Activated CD4-positive, alpha-beta T cell treated with anti-CD3 and anti-CD28 coated beads for 36 hours (primary cell): ENCODE measurements at regions of chr14 and their contacts with region 1.

Region 1: GRCh38 chr14:75002392-75003249 is at the start of gene EIF2B2:
- DNase-seq: peak; percentile 99
- ATAC-seq: peak; percentile 97
- H3K4me3 Mint-ChIP-seq: peak within 1 kb of the TSS; percentile 87
- H3K27ac Mint-ChIP-seq: peak within 1 kb of the TSS; percentile 88
- H3K4me1 Mint-ChIP-seq: peaks cover 34% of the 10 kb centered on the region
- H3K27me3 Mint-ChIP-seq: no peaks in the 10 kb centered on the region
- total RNA-seq, gene EIF2B2: 55.6 to 69.8 TPM

Region 2: DNA sequence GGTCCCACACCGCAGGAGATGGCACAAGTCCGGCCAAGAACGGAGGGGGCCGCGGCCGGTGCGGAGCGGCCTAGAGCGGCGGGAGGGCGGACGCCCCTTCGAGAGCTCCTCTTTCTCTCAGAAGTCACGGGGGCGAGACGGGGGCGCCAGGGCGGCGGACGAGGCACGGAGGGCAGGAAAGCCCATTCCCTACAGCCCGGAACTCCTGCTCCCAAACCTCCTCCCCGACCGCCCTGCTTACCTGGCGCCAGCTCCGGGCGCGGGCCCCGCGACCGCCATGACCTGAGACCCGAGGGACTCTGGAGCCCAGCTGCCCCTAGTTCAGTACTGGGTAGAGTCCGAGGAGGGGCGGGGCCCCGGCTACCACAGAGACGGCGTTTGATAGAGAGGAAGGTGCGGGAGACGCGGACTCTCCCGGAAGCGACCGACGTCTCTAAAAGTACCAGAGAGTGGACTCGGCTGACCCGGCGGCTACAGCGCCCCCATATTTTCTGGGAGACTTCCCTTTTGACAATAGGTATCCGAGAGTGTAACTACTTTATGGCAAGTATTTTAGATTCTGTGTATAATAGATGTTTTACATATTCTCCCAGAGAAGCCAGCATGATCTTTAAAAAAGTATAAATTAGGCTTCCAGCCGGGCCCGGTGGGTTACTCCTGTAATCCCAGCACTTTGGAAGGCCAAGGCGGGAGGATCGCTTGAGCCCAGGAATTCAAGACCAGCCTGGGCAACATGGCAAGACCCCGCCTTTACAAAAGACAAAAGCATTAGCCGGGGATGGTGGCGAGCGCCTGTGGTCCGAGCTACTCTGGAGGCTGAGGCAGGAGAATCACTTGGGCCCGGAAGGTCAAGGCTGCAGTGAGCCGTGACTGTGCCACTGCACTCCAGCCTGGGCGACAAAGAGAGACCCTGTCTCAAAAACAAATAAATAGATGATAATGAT is 699.7 kb before region 1 on chr14 and contains the start of gene ABCD4:
- CTCF ChIA-PET with region 1: no interaction called
- POLR2A ChIA-PET with region 1: no interaction called
- intact Hi-C with region 1: loop called in 1 of 2 experiments (anchors 2 kb)
- DNase-seq: peak; percentile 91
- ATAC-seq: peak; percentile 95
- H3K4me3 Mint-ChIP-seq: peak within 1 kb of the TSS; percentile 98
- H3K27ac Mint-ChIP-seq: peak within 1 kb of the TSS; percentile 98
- H3K4me1 Mint-ChIP-seq: peaks cover 32% of the 10 kb centered on the region
- H3K27me3 Mint-ChIP-seq: no peaks in the 10 kb centered on the region
- total RNA-seq, gene ABCD4: 43.0 to 43.1 TPM

Region 3: DNA sequence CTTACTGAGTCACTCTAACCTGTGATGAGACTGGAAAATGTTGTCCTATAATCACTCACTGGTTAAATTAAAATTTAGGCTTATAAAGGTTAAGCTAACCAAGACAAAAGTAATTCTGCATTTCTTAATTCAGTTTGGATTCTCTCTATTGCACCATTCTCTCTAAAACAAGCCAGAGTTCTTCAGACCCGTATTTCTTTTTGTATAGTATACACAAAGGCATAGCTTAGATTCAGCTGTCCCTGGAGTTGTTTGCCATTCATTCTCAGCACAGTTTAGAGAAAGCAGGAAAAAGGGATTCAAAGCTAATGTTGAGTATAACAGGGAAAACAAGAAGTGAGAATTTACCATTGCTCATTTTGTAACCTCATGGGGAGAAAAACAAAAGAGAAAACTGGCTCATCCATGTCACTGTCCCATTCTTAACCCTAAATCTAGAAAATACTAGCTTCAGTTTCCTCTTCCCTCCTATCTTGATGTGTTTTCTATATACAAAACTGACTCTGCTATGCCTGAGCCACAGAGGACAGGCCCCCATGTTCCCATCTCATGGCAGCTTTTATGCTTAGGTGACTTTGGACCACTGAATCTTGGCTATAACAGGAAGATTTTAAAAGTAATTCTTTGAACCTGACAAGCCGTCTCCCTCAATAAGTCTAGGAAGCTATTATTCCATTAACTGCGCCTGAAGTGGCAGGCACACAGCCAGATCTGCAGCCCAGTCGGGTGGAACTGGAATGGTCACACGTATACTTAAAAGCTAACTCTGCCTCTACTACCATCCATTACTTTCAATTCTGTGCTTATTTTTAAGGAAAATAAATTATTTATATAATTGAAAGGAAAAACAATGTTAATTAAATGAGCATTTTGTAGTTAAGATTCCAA is 296.8 kb before region 1 on chr14:
- CTCF ChIA-PET with region 1: no interaction called
- POLR2A ChIA-PET with region 1: no interaction called
- intact Hi-C with region 1: no loop called
- DNase-seq: no peak
- ATAC-seq: no peak
- H3K4me3 Mint-ChIP-seq: no peak overlapping the region
- H3K27ac Mint-ChIP-seq: no peak overlapping the region
- H3K4me1 Mint-ChIP-seq: peaks cover 37% of the 10 kb centered on the region
- H3K27me3 Mint-ChIP-seq: no peaks in the 10 kb centered on the region

Region 4: DNA sequence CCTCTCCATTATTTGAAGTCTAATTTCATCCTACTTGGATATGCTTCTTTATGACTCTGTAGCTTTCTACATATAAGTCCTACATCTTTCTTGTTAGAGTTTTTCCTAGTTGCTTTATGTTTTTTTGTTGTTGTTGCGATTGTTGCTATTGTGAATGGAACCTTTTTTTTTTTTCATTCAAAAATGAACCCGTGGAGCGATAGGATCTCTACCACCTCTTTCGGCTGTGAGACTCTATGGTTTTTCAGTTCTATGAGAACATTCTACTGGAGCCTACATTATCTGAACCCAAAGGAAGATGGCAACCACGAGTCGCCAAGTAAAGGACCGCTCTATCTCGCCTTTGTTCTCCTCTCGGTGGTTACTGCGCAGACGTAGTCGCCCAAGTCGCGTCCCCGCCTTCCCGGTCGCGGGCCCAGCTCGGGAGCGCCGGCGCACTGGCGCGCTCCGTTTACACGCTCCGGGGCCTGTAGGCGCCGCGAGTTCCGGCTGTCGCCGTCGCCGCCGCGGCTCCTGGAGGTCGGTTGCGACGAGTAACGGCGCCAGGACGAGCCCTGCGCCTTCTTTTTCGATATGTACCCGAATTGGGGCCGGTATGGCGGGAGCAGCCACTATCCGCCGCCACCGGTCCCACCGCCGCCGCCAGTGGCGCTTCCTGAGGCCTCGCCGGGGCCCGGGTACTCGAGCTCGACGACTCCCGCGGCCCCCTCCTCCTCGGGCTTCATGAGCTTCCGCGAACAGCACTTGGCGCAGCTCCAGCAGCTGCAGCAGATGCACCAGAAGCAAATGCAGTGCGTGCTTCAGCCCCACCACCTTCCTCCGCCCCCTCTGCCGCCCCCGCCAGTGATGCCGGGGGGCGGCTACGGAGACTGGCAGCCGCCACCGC is 239.5 kb before region 1 on chr14 and contains the start of gene YLPM1:
- CTCF ChIA-PET with region 1: no interaction called
- POLR2A ChIA-PET with region 1: no interaction called
- intact Hi-C with region 1: loop called in 1 of 2 experiments (anchors 1 kb)
- DNase-seq: peak; percentile 95
- ATAC-seq: peak; percentile 92
- H3K4me3 Mint-ChIP-seq: peak within 1 kb of the TSS; percentile 96
- H3K27ac Mint-ChIP-seq: peak within 1 kb of the TSS; percentile 97
- H3K4me1 Mint-ChIP-seq: peaks cover 42% of the 10 kb centered on the region
- H3K27me3 Mint-ChIP-seq: no peaks in the 10 kb centered on the region
- total RNA-seq, gene YLPM1: 53.0 to 60.9 TPM

Region 5: GRCh38 chr14:74945823-74946682 is 56.6 kb before region 1 on chr14:
- CTCF ChIA-PET with region 1: interaction called, 4 read pairs
- POLR2A ChIA-PET with region 1: interaction called, 5 read pairs
- intact Hi-C with region 1: loop called (anchors 2 to 5 kb)
- DNase-seq: peak; percentile 87
- ATAC-seq: peak; percentile 69
- H3K4me3 Mint-ChIP-seq: no peak overlapping the region
- H3K27ac Mint-ChIP-seq: no peak overlapping the region
- H3K4me1 Mint-ChIP-seq: peaks cover 28% of the 10 kb centered on the region
- H3K27me3 Mint-ChIP-seq: no peaks in the 10 kb centered on the region

Region 6: GRCh38 chr14:75063407-75064213 is 61.0 kb after region 1 on chr14 and contains the start of gene ACYP1:
- CTCF ChIA-PET with region 1: no interaction called
- POLR2A ChIA-PET with region 1: no interaction called
- intact Hi-C with region 1: loop called (anchors 1 to 5 kb)
- DNase-seq: peak; percentile 95
- ATAC-seq: peak; percentile 99
- H3K4me3 Mint-ChIP-seq: peak within 1 kb of the TSS; percentile 96
- H3K27ac Mint-ChIP-seq: peak within 1 kb of the TSS; percentile 93
- H3K4me1 Mint-ChIP-seq: peaks cover 27% of the 10 kb centered on the region
- H3K27me3 Mint-ChIP-seq: no peaks in the 10 kb centered on the region
- total RNA-seq, gene ACYP1: 37.0 to 40.2 TPM

Region 7: GRCh38 chr14:75293920-75294642 is 291.5 kb after region 1 on chr14:
- CTCF ChIA-PET with region 1: no interaction called
- POLR2A ChIA-PET with region 1: no interaction called
- intact Hi-C with region 1: loop called in 1 of 2 experiments (anchors 1 kb)
- DNase-seq: peak; percentile 97
- ATAC-seq: peak; percentile 96
- H3K4me3 Mint-ChIP-seq: peak overlapping the region; percentile 73
- H3K27ac Mint-ChIP-seq: peak overlapping the region; percentile 85
- H3K4me1 Mint-ChIP-seq: peaks cover 22% of the 10 kb centered on the region
- H3K27me3 Mint-ChIP-seq: peaks cover 3% of the 10 kb centered on the region